ENCODE measurements at regions of chr1 and their contacts with region 1.

Region 1: GRCh38 chr1:26500488-26501175 is 28.4 kb downstream of the HMGN2 start:
- DNase-seq: peak; percentile 76 to 92 (median 88)
- ATAC-seq: peak; percentile 73
- H3K4me3 Mint-ChIP-seq: peak overlapping the region; percentile 82 to 90 (median 86)
- H3K27ac Mint-ChIP-seq: peak overlapping the region in 9 of 10 donors; percentile 81 to 97 (median 93)
- H3K4me1 Mint-ChIP-seq: peaks cover 6 to 23% (median 17%) of the 10 kb centered on the region in 4 donors
- H3K27me3 Mint-ChIP-seq: no peaks in the 10 kb centered on the region

Region 2: DNA sequence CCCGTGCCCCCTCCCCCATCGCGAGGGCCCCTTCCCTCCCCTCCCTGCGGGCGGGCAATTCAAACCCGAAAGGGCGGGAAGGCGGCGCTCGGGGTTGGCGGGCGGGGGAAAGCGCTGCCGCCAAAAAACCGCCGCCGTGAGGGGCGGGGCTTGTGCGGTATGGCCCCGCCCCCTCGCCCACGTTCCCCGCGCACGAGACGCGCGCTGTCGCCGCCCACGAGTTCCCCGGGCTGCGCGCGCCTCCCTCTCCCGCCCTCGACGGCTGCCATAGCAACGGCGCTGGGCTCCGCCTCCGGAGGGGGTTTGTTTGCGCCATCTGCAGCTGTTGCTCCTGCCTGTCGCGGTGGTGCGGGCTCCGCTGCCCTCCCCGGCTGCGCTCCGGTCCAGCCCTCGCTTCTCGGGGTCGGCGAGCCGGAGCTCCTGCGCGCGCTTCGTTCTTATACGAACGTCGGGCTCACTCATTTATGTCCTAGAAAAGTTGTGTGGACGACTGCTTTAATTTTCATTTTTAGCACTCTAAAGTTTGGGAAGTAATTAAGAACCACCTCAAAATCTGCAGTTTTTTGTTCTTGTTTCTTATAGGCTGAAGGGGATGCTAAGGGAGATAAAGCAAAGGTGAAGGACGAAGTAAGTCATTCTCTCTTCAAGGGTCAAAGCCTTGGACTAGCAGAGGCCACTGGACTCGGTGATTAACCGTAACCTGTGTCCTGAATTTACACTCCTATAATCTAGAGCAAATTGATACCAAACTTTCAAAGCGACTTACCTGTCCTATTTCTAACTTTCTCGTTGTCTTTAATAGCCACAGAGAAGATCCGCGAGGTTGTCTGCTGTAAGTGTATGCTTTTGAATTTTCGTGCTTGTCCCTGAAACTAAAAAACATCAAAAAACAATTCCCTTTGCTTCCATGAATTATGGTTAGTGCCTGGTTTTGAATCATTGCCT is 27.5 kb before region 1 on chr1:
- POLR2A ChIA-PET with region 1: interaction called, 38 read pairs
- DNase-seq: peak; percentile 94 to 98 (median 96)
- ATAC-seq: peak; percentile 71 to 76
- H3K4me3 Mint-ChIP-seq: peak overlapping the region; percentile 86 to 95 (median 89)
- H3K27ac Mint-ChIP-seq: peak overlapping the region; percentile 74 to 92 (median 90)
- H3K4me1 Mint-ChIP-seq: peaks cover 16 to 60% (median 54%) of the 10 kb centered on the region in 4 donors
- H3K27me3 Mint-ChIP-seq: no peaks in the 10 kb centered on the region

Region 3: DNA sequence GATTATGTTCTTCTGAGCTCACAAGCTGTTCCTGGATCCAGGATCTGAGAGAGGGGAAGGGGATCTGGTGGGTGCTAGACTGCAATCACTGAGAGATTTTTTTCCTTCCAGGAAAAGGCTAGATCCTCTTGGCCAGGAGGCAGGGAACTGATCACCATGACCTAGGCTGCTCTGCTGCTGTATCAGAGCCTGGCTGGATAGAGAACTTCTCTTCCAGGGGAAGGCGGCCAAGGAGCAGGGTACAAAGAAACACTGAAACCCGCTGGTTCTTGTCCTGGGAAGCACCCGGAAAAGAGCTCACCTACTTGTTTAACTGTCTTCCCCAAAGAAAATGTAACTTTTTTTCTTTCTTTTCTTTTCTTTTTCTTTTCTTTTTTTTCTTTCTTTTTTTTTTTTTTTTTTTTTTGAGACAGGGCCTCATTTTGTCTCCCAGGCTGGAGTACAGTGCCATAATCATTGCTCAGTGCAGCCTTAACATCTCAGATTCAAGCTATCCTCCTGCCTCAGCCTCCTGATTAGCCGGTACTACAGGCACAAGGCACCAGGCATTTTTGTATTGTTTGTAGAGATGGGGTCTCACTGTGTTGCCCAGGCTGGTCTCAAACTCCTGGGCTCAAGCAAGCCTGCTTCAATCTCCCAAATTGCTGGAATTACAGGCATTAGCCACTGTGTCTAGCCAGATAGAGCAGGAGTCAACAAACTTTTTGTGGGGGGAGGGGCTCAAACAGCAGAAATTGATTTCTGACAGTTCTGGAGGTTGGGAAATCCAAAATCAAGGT is 16.5 kb after region 1 on chr1:
- POLR2A ChIA-PET with region 1: no interaction called
- DNase-seq: no peak
- ATAC-seq: no peak
- H3K4me3 Mint-ChIP-seq: no peak overlapping the region
- H3K27ac Mint-ChIP-seq: peak overlapping the region in 2 of 10 donors; percentile 17 to 49
- H3K4me1 Mint-ChIP-seq: no peaks in the 10 kb centered on the region
- H3K27me3 Mint-ChIP-seq: peaks cover 0 to 1% (median 0%) of the 10 kb centered on the region in 5 donors

Region 4: DNA sequence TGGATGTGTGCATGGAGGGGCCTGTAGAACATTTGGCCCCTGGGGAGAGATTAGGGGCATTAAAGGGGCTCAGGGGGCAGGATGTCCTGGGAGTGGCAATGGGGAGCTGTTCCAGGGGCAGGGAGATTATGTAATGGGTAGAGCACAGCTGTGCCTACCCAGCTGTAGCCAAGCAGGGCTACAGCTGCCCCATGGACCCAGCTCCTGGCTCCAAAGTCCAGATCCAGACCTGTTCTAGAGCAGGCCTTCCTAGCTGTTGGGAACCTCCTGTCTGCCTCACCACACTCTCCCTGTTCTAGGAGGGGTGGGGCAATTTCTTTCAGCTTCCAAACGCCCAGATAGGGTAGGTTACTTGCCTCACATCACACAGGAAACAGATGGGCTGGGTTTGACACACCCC is 34.6 kb after region 1 on chr1:
- POLR2A ChIA-PET with region 1: interaction called, 49 read pairs
- DNase-seq: no peak
- ATAC-seq: no peak
- H3K4me3 Mint-ChIP-seq: peak overlapping the region in 2 of 10 donors; percentile 5 to 43
- H3K27ac Mint-ChIP-seq: peak overlapping the region in 5 of 10 donors; percentile 17 to 78 (median 68)
- H3K4me1 Mint-ChIP-seq: peaks cover 32 to 75% (median 59%) of the 10 kb centered on the region in 4 donors
- H3K27me3 Mint-ChIP-seq: no peaks in the 10 kb centered on the region

Region 5: DNA sequence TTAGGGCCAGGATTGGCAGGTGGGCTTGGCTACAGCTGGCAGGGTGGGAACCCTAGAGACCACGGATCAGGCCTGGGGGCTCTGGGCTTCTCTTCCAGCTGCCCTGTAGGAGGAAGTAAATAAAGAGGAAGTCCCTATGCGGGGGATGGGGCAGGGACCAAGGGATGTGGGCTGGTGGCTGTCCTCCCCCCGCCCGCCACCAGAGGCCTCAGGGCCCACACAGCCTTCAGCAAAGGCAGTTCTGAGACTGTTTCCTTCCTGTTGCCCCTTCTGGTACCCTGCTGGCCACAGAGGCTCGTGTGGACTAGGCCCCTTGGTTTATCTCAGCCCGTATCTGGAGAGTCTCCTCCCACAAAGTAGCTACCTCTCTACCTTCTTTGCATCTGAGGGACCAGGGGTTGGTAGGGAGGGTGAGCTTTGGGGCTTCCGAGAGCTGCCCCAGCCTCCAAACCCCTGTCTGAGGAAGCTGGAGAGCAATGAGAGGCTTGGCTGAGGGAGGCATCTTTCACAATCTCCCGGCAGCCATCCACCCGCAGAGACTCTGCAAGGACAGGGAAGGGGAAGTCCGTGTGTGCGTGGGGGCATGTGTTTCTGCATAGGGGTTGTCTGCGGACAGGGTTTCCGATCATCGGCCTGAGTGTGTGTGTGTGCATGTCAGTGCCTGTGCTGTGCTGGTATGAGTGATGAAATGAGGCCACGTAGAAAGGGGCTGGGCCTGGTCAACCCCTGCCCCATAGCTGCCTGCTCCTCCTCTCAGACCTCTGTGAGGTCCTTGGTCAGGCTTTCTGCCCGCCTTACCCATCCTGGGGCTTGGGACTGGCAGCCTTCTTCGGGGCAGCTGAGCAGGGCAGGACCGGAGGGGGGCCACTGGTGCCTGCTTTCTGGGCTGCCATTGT is 41.4 kb after region 1 on chr1:
- POLR2A ChIA-PET with region 1: interaction called, 49 read pairs
- DNase-seq: peak; percentile 30 to 85 (median 69)
- ATAC-seq: peak; percentile 71
- H3K4me3 Mint-ChIP-seq: peak overlapping the region; percentile 74 to 91 (median 83)
- H3K27ac Mint-ChIP-seq: peak overlapping the region; percentile 91 to 99 (median 96)
- H3K4me1 Mint-ChIP-seq: peaks cover 51 to 96% (median 89%) of the 10 kb centered on the region in 4 donors
- H3K27me3 Mint-ChIP-seq: no peaks in the 10 kb centered on the region

Region 6: GRCh38 chr1:26921540-26922430 is 421.2 kb after region 1 on chr1 and contains the start of gene NUDC:
- POLR2A ChIA-PET with region 1: no interaction called
- DNase-seq: peak; percentile 92 to 97 (median 95)
- ATAC-seq: peak; percentile 90 to 94
- H3K4me3 Mint-ChIP-seq: peak within 1 kb of the TSS; percentile 88 to 98 (median 96)
- H3K27ac Mint-ChIP-seq: peak within 1 kb of the TSS; percentile 89 to 99 (median 98)
- H3K4me1 Mint-ChIP-seq: peaks cover 11 to 40% (median 37%) of the 10 kb centered on the region in 4 donors
- H3K27me3 Mint-ChIP-seq: no peaks in the 10 kb centered on the region
- polyA plus RNA-seq, gene NUDC: 104 to 131 (median 120) TPM